CD8-positive, alpha-beta T cell (primary cell): ENCODE measurements at regions of chr3 and their contacts with region 1.

Region 1: GRCh38 chr3:50192689-50193141 is 1.3 kb downstream of the GNAT1 start:
- DNase-seq: peak; percentile 69 to 88 (median 82)
- ATAC-seq: peak; percentile 34
- H3K4me3 ChIP-seq: no peak overlapping the region
- H3K4me3 Mint-ChIP-seq: no peak overlapping the region
- H3K27ac ChIP-seq: no peak overlapping the region
- H3K27ac Mint-ChIP-seq: no peak overlapping the region
- H3K4me1 ChIP-seq: peaks cover 20% of the 10 kb centered on the region
- H3K4me1 Mint-ChIP-seq: peaks cover 15% of the 10 kb centered on the region
- H3K27me3 ChIP-seq: peaks cover 7 to 15% of the 10 kb centered on the region in 2 experiments
- H3K27me3 Mint-ChIP-seq: peaks cover 6% of the 10 kb centered on the region
- CTCF ChIP-seq: peak; percentile 81

Region 2: DNA sequence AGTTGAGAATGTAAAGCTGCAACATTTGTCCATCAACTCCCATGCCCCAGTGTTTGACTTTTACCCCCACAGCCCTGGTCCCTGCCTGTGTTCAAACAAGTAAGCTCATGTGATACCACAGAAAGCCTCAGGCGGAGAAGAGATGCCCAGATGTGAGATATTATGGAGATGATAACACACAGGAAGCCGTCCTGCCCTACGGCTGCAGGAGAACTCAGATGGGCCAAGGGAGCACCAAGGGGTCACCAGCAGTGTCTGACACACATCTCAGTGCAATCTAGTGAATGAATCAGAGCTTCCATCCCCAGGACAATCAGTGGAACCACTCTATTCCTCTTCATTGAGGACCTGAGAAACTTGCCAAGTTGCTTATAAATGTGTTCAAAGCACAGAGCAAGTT is 1845.2 kb before region 1 on chr3:
- CTCF ChIA-PET with region 1: no interaction called
- POLR2A ChIA-PET with region 1: no interaction called
- intact Hi-C with region 1: no loop called
- DNase-seq: no peak
- ATAC-seq: no peak
- H3K4me3 ChIP-seq: no peak overlapping the region
- H3K4me3 Mint-ChIP-seq: no peak overlapping the region
- H3K27ac ChIP-seq: no peak overlapping the region
- H3K27ac Mint-ChIP-seq: no peak overlapping the region
- H3K4me1 ChIP-seq: no peaks in the 10 kb centered on the region
- H3K4me1 Mint-ChIP-seq: no peaks in the 10 kb centered on the region
- H3K27me3 ChIP-seq: no peaks in the 10 kb centered on the region
- H3K27me3 Mint-ChIP-seq: peaks cover 2% of the 10 kb centered on the region
- CTCF ChIP-seq: no peak

Region 3: DNA sequence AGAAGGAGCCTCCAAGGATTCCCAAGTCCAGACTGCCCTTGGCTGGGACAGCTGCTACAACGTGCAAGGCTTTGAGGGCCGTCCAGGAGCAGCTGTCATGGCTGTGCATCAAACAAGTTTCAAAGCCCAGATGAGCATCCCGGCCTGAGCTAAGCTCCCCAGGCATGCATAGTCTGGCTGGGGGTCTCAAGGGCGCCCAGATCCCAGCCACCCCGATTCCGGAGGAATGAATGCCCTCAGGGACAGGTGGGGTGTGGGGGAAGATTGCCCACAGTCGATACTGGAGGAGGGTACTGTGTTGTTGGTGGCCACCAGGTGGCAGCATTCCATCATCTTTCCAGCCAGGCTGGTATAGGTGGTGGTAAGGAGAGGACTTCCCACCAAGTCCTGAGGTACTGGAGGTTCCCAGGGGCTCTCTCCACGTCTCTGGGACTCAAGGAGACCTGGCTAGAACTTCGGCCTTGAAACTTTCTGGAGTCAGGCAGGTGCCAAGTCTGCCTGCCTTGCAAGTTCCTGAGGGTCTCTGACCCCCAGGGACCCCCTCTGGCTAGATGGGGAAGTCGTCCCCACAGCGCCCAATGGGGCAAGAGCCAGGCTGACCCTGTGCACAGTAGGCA is 71.2 kb before region 1 on chr3:
- CTCF ChIA-PET with region 1: interaction called, 8 read pairs
- POLR2A ChIA-PET with region 1: no interaction called
- intact Hi-C with region 1: loop called in 1 of 2 experiments (anchors 1 kb)
- DNase-seq: peak; percentile 50 to 84 (median 75)
- ATAC-seq: peak; percentile 88
- H3K4me3 ChIP-seq: no peak overlapping the region
- H3K4me3 Mint-ChIP-seq: no peak overlapping the region
- H3K27ac ChIP-seq: no peak overlapping the region
- H3K27ac Mint-ChIP-seq: no peak overlapping the region
- H3K4me1 ChIP-seq: no peaks in the 10 kb centered on the region
- H3K4me1 Mint-ChIP-seq: no peaks in the 10 kb centered on the region
- H3K27me3 ChIP-seq: no peaks in the 10 kb centered on the region
- H3K27me3 Mint-ChIP-seq: no peaks in the 10 kb centered on the region
- CTCF ChIP-seq: peak; percentile 86

Region 4: GRCh38 chr3:50221411-50222168 is 28.9 kb after region 1 on chr3:
- CTCF ChIA-PET with region 1: interaction called, 197 read pairs
- POLR2A ChIA-PET with region 1: interaction called, 14 read pairs
- intact Hi-C with region 1: loop called (anchors 1 kb)
- DNase-seq: peak in 1 of 9 experiments; percentile 10
- ATAC-seq: no peak
- H3K4me3 ChIP-seq: no peak overlapping the region
- H3K4me3 Mint-ChIP-seq: no peak overlapping the region
- H3K27ac ChIP-seq: no peak overlapping the region
- H3K27ac Mint-ChIP-seq: no peak overlapping the region
- H3K4me1 ChIP-seq: peaks cover 5% of the 10 kb centered on the region
- H3K4me1 Mint-ChIP-seq: peaks cover 6% of the 10 kb centered on the region
- H3K27me3 ChIP-seq: no peaks in the 10 kb centered on the region
- H3K27me3 Mint-ChIP-seq: no peaks in the 10 kb centered on the region
- CTCF ChIP-seq: no peak

Region 5: DNA sequence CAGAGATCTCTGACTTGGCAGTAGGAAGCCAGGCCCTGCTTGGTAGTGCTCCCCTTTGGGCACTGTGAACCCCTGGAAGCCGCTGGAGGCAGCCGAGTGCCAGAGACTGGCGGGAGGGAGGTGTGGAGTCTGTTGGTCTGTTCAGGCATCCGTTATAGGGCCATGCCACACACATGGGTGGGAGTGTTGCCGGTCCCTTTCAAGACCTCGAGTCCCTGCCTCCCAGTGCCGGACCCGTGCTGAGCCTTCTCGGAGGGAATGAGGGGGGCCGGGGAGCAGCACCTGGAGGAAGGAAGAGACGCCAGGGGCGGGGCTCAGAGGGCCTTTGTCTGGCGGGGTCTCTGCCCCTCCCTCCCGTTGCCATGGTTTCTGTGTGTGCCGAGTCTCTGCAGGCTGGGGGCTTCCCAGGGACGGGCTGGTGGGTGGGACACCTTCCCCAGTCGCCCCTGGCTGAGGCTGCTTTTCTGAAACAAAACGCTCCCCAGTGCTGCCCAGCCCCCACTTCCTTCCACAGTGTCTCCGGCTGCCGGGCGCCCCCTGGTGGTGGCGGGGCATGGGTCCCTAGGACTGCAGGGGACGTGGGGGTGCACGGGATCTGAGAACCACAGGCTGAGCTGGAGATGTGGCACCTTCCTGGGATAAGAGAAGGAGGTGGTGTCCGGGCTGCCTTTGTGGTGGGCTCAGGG is 53.3 kb after region 1 on chr3:
- CTCF ChIA-PET with region 1: interaction called, 78 read pairs
- POLR2A ChIA-PET with region 1: interaction called, 7 read pairs
- intact Hi-C with region 1: loop called (anchors 1 kb)
- DNase-seq: peak; percentile 90 to 99 (median 95)
- ATAC-seq: peak; percentile 81
- H3K4me3 ChIP-seq: peak overlapping the region; percentile 40 to 55
- H3K4me3 Mint-ChIP-seq: peak overlapping the region; percentile 75
- H3K27ac ChIP-seq: peak overlapping the region; percentile 32 to 88
- H3K27ac Mint-ChIP-seq: peak overlapping the region; percentile 94
- H3K4me1 ChIP-seq: peaks cover 87% of the 10 kb centered on the region
- H3K4me1 Mint-ChIP-seq: peaks cover 76% of the 10 kb centered on the region
- H3K27me3 ChIP-seq: no peaks in the 10 kb centered on the region
- H3K27me3 Mint-ChIP-seq: no peaks in the 10 kb centered on the region
- CTCF ChIP-seq: peak; percentile 80

Region 6: DNA sequence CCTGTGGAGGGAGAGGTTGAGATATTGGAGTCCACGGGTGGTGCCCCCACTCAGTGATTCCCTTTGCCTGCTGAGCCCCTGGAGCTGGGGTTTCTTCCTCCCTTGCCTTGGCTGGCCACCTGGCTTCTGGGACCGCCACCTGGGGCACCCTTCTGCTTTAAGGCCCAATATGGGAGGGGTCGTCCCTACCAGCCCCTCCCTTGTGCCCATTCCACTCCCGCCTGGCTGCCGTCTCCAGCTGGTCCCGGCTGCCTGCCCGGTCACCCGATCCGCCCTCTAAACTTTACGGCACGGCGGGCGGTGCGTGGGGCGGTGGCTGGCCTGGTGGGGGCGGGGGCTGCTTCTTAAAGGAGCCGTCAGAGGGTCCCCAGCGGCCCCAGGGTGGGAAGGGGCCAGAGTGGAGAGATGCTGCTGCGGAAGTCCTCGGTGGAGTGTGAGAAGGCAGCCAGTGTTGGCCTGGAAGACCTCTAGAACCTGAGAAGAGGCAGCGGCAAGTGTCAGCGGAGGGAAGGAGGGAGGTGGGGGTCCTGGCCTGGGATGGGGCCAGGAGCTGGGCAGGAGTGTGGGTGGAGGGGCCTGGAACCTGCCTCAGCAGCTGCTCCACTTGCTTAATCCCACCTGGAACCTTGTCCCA is 74.7 kb after region 1 on chr3:
- CTCF ChIA-PET with region 1: interaction called, 79 read pairs
- POLR2A ChIA-PET with region 1: no interaction called
- intact Hi-C with region 1: no loop called
- DNase-seq: no peak
- ATAC-seq: no peak
- H3K4me3 ChIP-seq: no peak overlapping the region
- H3K4me3 Mint-ChIP-seq: no peak overlapping the region
- H3K27ac ChIP-seq: no peak overlapping the region
- H3K27ac Mint-ChIP-seq: no peak overlapping the region
- H3K4me1 ChIP-seq: no peaks in the 10 kb centered on the region
- H3K4me1 Mint-ChIP-seq: no peaks in the 10 kb centered on the region
- H3K27me3 ChIP-seq: no peaks in the 10 kb centered on the region
- H3K27me3 Mint-ChIP-seq: peaks cover 9% of the 10 kb centered on the region
- CTCF ChIP-seq: no peak

Region 7: GRCh38 chr3:50321336-50322114 is 128.8 kb after region 1 on chr3:
- CTCF ChIA-PET with region 1: interaction called, 7 read pairs
- POLR2A ChIA-PET with region 1: no interaction called
- intact Hi-C with region 1: loop called in 1 of 2 experiments (anchors 2 kb)
- DNase-seq: peak; percentile 65 to 89 (median 82)
- ATAC-seq: peak; percentile 69
- H3K4me3 ChIP-seq: peak overlapping the region; percentile 71 to 96
- H3K4me3 Mint-ChIP-seq: peak overlapping the region; percentile 85
- H3K27ac ChIP-seq: peak overlapping the region; percentile 77 to 94
- H3K27ac Mint-ChIP-seq: peak overlapping the region; percentile 92
- H3K4me1 ChIP-seq: peaks cover 30% of the 10 kb centered on the region
- H3K4me1 Mint-ChIP-seq: peaks cover 41% of the 10 kb centered on the region
- H3K27me3 ChIP-seq: no peaks in the 10 kb centered on the region
- H3K27me3 Mint-ChIP-seq: no peaks in the 10 kb centered on the region
- CTCF ChIP-seq: peak; percentile 47